SK-N-SH (cell line): ENCODE measurements at regions of chr10 and their contacts with region 1.

Region 1: GRCh38 chr10:44932517-44933450 is 21.6 kb downstream of the TMEM72 start:
- DNase-seq: peak; percentile 79
- H3K4me3 ChIP-seq: no peak overlapping the region; a peak in 1 of 4 replicates
- H3K27ac ChIP-seq: no peak overlapping the region
- H3K4me1 ChIP-seq: peaks cover 0 to 10% of the 10 kb centered on the region in 2 experiments; a peak in 2 of 4 replicates
- H3K27me3 ChIP-seq: peaks cover 8% of the 10 kb centered on the region; the same call in 1 of the 2 replicates
- CTCF ChIP-seq: peak; percentile 91
- EP300 ChIP-seq: no peak
- RAD21 ChIP-seq: peak; percentile 91

Region 2: GRCh38 chr10:44913350-44914081 is 19.3 kb before region 1 on chr10:
- CTCF ChIA-PET with region 1: interaction called, 20 read pairs
- POLR2A ChIA-PET with region 1: no interaction called
- DNase-seq: no peak
- H3K4me3 ChIP-seq: no peak overlapping the region
- H3K27ac ChIP-seq: no peak overlapping the region
- H3K4me1 ChIP-seq: peaks cover 0 to 6% of the 10 kb centered on the region in 2 experiments; a peak in 1 of 4 replicates
- H3K27me3 ChIP-seq: peaks cover 55% of the 10 kb centered on the region
- CTCF ChIP-seq: no peak
- EP300 ChIP-seq: no peak
- RAD21 ChIP-seq: no peak

Region 3: GRCh38 chr10:44947371-44948152 is 14.8 kb after region 1 on chr10:
- CTCF ChIA-PET with region 1: interaction called, 44 read pairs
- POLR2A ChIA-PET with region 1: interaction called, 4 read pairs
- DNase-seq: no peak
- H3K4me3 ChIP-seq: no peak overlapping the region
- H3K27ac ChIP-seq: no peak overlapping the region
- H3K4me1 ChIP-seq: peaks cover 0 to 4% of the 10 kb centered on the region in 2 experiments; a peak in 1 of 4 replicates
- H3K27me3 ChIP-seq: no peaks in the 10 kb centered on the region
- CTCF ChIP-seq: no peak
- EP300 ChIP-seq: no peak
- RAD21 ChIP-seq: no peak

Region 4: GRCh38 chr10:44974628-44975431 is 42.0 kb after region 1 on chr10:
- CTCF ChIA-PET with region 1: interaction called, 121 read pairs
- POLR2A ChIA-PET with region 1: no interaction called
- DNase-seq: peak; percentile 94
- H3K4me3 ChIP-seq: peak overlapping the region; percentile 29 to 45
- H3K27ac ChIP-seq: peak overlapping the region; percentile 24 to 44; a peak in 1 of 4 replicates
- H3K4me1 ChIP-seq: peaks cover 35 to 45% of the 10 kb centered on the region in 2 experiments; a peak in 3 of 4 replicates
- H3K27me3 ChIP-seq: no peaks in the 10 kb centered on the region
- CTCF ChIP-seq: peak; percentile 94
- EP300 ChIP-seq: no peak
- RAD21 ChIP-seq: peak; percentile 67

Region 5: GRCh38 chr10:45000752-45001380 is 68.1 kb after region 1 on chr10 and contains the start of gene ZNF22:
- CTCF ChIA-PET with region 1: interaction called, 17 read pairs
- POLR2A ChIA-PET with region 1: no interaction called
- DNase-seq: peak; percentile 91
- H3K4me3 ChIP-seq: peak within 1 kb of the TSS; percentile 71
- H3K27ac ChIP-seq: peak within 1 kb of the TSS; percentile 76 to 92
- H3K4me1 ChIP-seq: peaks cover 8 to 12% of the 10 kb centered on the region in 2 experiments; a peak in 3 of 4 replicates
- H3K27me3 ChIP-seq: no peaks in the 10 kb centered on the region
- CTCF ChIP-seq: no peak
- EP300 ChIP-seq: peak in 1 of 2 experiments; percentile 24; a peak in 1 of 4 replicates
- RAD21 ChIP-seq: no peak
- polyA plus RNA-seq, gene ZNF22: 10.2 and 13.2 TPM in 2 replicates